Activated B cell treated with CpG ODN at 0.5 μM for 24 hours (primary cell): ENCODE measurements at regions of chr19 and their contacts with region 1.

Region 1: DNA sequence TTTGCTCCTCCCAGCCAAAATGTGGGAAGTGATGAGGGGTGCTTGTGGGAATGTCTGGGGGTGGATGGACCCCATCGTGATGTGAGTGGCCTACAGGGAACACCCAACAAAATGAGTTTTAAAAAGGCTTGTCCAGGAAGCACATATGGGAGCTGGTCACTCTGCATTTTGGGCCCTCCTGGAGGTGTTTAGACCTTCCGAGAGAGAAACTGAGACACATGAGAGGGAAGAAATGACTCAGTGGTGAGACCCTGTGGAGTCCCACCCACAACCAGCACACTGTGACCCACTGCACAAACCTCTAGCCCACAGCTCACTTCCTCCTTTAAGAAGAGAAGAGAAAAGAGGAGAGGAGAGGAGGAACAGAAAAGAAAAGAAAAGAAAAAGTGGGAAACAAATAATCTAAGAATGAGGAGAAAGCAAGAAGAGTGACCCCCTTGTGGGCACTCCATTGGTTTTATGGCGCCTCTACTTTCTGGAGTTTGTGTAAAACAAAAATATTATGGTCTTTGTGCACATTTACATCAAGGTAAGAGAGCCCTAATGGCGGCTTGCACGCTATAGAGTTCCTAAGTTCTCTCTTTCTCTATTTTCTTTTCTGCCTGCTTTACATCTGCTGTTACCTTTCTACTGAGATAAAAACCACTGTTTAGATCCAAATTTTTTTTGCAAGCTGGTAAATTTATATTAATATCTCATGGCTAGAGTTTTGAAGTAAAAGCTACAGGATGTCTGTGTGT is 13.3 kb upstream of the LILRB1 start:
- DNase-seq: no peak
- ATAC-seq: peak; percentile 84
- H3K4me3 Mint-ChIP-seq: peak overlapping the region; percentile 99
- H3K27ac Mint-ChIP-seq: peak overlapping the region; percentile 99
- H3K4me1 Mint-ChIP-seq: peaks cover 80% of the 10 kb centered on the region
- H3K27me3 Mint-ChIP-seq: no peaks in the 10 kb centered on the region
- CTCF ChIP-seq: no peak

Region 2: GRCh38 chr19:54573330-54573872 is 43.6 kb before region 1 on chr19 and contains the start of gene LILRA2:
- CTCF ChIA-PET with region 1: no interaction called
- POLR2A ChIA-PET with region 1: interaction called, 4 read pairs
- intact Hi-C with region 1: loop called (anchors 5 kb)
- DNase-seq: no peak
- ATAC-seq: peak; percentile 58
- H3K4me3 Mint-ChIP-seq: peak within 1 kb of the TSS; percentile 58
- H3K27ac Mint-ChIP-seq: peak within 1 kb of the TSS; percentile 62
- H3K4me1 Mint-ChIP-seq: peaks cover 29% of the 10 kb centered on the region
- H3K27me3 Mint-ChIP-seq: peaks cover 5% of the 10 kb centered on the region
- CTCF ChIP-seq: no peak
- total RNA-seq, gene LILRA2: 0.22 TPM in 1 of 2 replicates, not detected in the other

Region 3: DNA sequence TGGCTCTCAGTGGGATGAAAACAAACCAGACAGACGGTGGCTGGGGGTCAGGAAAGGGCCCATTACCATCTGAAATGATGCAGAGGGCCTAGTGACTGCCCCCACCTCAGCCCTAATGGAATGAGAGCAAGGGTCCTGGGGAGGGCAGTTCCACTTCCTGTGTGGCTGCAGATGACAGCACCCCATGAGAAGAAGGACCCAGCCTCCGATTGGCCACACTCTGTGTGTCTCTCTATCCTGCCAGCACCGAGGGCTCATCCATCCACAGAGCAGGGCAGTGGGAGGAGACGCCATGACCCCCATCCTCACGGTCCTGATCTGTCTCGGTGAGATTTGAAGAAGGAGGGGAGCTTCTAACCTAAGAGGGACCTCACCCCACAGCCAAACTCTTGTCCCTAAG is 13.8 kb after region 1 on chr19:
- CTCF ChIA-PET with region 1: no interaction called
- POLR2A ChIA-PET with region 1: interaction called, 7 read pairs
- intact Hi-C with region 1: loop called (anchors 1 kb)
- DNase-seq: no peak
- ATAC-seq: peak; percentile 29
- H3K4me3 Mint-ChIP-seq: peak overlapping the region; percentile 76
- H3K27ac Mint-ChIP-seq: peak overlapping the region; percentile 86
- H3K4me1 Mint-ChIP-seq: peaks cover 62% of the 10 kb centered on the region
- H3K27me3 Mint-ChIP-seq: no peaks in the 10 kb centered on the region
- CTCF ChIP-seq: no peak

Region 4: GRCh38 chr19:54662730-54663129 is 45.7 kb after region 1 on chr19 and contains the start of gene LILRB4:
- CTCF ChIA-PET with region 1: no interaction called
- POLR2A ChIA-PET with region 1: interaction called, 4 read pairs
- intact Hi-C with region 1: loop called (anchors 5 kb)
- DNase-seq: no peak
- ATAC-seq: peak; percentile 40
- H3K4me3 Mint-ChIP-seq: peak within 1 kb of the TSS; percentile 56
- H3K27ac Mint-ChIP-seq: peak within 1 kb of the TSS; percentile 19
- H3K4me1 Mint-ChIP-seq: peaks cover 32% of the 10 kb centered on the region
- H3K27me3 Mint-ChIP-seq: peaks cover 9% of the 10 kb centered on the region
- CTCF ChIP-seq: no peak
- total RNA-seq, gene LILRB4: 0.76 and 1.4 TPM in 2 replicates